Activated CD4-positive, alpha-beta memory T cell treated with anti-CD3 and anti-CD28 coated beads, Interleukin-2, amount 10 ng/mL, durations not matched to agents 7 days and 5 days (primary cell): ENCODE measurements at regions of chr17 and their contacts with region 1.

Region 1: DNA sequence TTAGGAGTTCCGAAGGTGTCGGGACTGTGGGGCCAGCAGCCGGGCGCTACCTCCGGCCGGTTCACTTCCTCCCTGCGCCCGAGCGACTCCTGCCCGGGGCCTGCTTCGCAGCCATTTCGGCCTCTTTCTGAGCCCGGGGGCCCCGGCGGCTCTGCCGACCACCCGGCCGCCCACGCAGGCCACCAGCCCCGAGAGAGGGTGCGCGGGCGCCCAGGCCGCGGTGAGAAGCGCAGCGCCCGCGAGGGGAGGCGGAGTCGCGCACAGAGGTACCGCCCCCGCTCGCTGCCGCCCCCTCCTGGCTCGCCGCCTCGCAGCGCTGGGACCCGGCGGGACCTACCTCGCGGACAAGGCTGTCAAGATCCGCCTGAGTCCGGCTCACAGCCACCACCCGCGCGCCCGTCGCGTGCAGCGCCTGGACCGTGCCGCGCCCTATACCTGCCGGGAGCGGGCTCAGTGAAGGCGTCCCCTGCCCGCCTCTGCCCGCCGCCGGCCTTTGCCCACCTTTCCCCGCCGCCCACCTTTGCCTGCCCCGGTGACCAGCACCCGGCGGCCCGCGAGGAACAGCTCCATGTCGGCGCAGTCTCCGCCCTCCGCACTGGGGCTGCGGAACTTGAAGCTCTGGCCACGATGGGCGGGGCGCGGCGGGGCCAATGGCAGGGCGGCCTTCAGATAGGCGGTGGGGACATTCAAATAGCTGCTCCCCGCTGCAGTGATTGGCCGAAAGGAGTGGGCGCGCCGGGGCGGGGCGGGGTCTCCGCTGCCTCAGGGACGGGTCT is at the start of gene DCXR:
- DNase-seq: peak; percentile 97
- H3K4me3 Mint-ChIP-seq: peak within 1 kb of the TSS; percentile 83
- H3K27ac Mint-ChIP-seq: peak within 1 kb of the TSS; percentile 94
- H3K4me1 Mint-ChIP-seq: peaks cover 28% of the 10 kb centered on the region
- H3K27me3 Mint-ChIP-seq: no peaks in the 10 kb centered on the region
- total RNA-seq, gene DCXR: 93.9 to 95.2 TPM

Region 2: GRCh38 chr17:81991684-81992305 is 45.5 kb before region 1 on chr17:
- CTCF ChIA-PET with region 1: no interaction called
- POLR2A ChIA-PET with region 1: no interaction called
- DNase-seq: no peak
- H3K4me3 Mint-ChIP-seq: no peak overlapping the region
- H3K27ac Mint-ChIP-seq: no peak overlapping the region
- H3K4me1 Mint-ChIP-seq: no peaks in the 10 kb centered on the region
- H3K27me3 Mint-ChIP-seq: no peaks in the 10 kb centered on the region

Region 3: GRCh38 chr17:82022981-82023374 is 14.3 kb before region 1 on chr17 and contains the start of gene LRRC45:
- CTCF ChIA-PET with region 1: interaction called, 43 read pairs
- POLR2A ChIA-PET with region 1: interaction called, 41 read pairs
- DNase-seq: peak; percentile 100
- H3K4me3 Mint-ChIP-seq: peak within 1 kb of the TSS; percentile 82
- H3K27ac Mint-ChIP-seq: peak within 1 kb of the TSS; percentile 60
- H3K4me1 Mint-ChIP-seq: peaks cover 42% of the 10 kb centered on the region
- H3K27me3 Mint-ChIP-seq: no peaks in the 10 kb centered on the region
- total RNA-seq, gene LRRC45: 34.8 to 35.5 TPM

Region 4: DNA sequence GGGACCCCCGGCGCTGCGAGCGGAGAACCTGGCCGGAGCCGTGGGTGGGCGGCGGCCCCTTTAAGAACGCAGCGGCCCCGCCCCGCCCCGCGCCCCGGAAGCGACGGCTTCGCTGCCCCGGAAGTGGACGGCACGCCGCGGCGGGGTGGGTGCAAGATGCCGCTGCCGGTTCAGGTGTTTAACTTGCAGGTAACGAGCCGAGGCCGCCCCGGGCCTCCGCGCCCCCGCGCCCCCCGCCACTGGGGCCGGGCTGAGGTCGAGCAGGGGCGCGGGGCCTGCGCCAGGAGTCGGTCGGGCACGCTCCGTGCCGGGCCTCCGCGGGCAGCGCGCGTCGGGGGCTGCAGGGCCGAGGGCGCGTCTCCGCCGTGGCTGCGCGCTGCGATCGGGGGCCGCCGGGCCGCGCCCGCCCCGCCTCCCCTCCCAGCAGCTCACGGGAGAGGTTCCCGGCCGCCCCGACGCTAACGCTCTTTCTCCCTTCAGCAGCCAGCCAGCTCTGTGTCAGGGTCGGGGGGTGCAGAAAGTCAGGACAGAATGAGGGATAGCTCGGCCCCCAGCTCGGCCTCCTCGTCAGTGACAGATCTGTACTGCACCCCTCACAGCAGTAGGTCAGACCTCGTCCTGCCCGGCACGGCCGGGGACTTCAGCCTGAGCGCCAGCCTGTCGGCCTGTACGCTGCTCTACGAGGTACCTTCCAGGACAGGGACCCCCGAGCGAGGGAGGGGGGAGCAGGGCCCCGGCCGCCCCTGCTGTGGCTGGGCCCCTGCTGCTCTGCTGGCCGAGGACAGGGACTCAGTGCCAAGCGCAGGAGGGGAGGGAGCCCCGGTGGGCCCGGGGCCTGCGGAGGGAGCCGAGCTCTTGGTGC is 14.7 kb after region 1 on chr17 and contains the starts of genes GPS1 and RFNG:
- CTCF ChIA-PET with region 1: interaction called, 9 read pairs
- POLR2A ChIA-PET with region 1: interaction called, 27 read pairs
- DNase-seq: peak; percentile 85
- H3K4me3 Mint-ChIP-seq: peak within 1 kb of the TSS; percentile 84
- H3K27ac Mint-ChIP-seq: peak within 1 kb of the TSS; percentile 78
- H3K4me1 Mint-ChIP-seq: peaks cover 25% of the 10 kb centered on the region
- H3K27me3 Mint-ChIP-seq: no peaks in the 10 kb centered on the region
- total RNA-seq, gene GPS1: 69.0 to 75.6 TPM
- total RNA-seq, gene RFNG: 26.3 to 28.4 TPM

Region 5: DNA sequence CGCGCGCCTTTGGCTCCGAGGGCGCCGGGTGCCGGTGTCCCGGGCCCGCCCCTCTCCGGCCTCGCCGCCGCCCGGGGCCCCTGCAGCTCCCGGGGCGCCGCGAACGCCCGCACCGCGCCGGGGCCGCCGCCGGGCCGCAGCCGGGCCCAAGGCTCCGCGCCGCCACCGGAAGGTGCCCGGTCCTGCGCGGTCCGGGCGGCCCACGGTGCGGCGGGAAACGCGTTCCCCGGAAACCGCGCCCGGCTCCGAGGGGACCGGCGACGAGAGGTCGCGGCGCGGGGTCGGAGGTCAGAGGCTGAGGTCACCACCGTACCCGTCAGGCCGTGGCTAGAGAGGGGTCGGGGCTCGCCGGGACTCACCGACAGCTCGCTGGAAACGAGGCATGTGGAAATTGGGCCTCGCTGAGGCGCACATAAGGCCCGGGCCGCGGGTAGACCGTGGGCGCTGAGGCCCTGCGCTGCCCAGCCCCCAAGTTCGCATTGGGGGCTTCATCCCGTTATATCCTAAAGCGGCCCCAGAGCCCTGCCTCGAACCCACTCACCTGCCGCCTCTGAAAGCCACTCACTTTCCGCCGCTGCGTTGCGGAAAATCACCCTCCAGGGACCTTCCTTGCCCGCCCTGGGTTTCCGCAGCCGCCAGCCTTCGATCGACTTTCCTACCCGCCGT is 28.5 kb after region 1 on chr17 and contains the start of gene DUS1L:
- CTCF ChIA-PET with region 1: interaction called, 9 read pairs
- POLR2A ChIA-PET with region 1: interaction called, 16 read pairs
- DNase-seq: peak; percentile 78
- H3K4me3 Mint-ChIP-seq: peak within 1 kb of the TSS; percentile 82
- H3K27ac Mint-ChIP-seq: peak within 1 kb of the TSS; percentile 82
- H3K4me1 Mint-ChIP-seq: peaks cover 17% of the 10 kb centered on the region
- H3K27me3 Mint-ChIP-seq: peaks cover 2% of the 10 kb centered on the region
- total RNA-seq, gene DUS1L: 98.8 to 99.3 TPM

Region 6: GRCh38 chr17:82212331-82213250 is 175.3 kb after region 1 on chr17 and contains the start of gene CCDC57:
- CTCF ChIA-PET with region 1: no interaction called
- POLR2A ChIA-PET with region 1: no interaction called
- DNase-seq: peak; percentile 77
- H3K4me3 Mint-ChIP-seq: peak within 1 kb of the TSS; percentile 77
- H3K27ac Mint-ChIP-seq: peak within 1 kb of the TSS; percentile 52
- H3K4me1 Mint-ChIP-seq: peaks cover 43% of the 10 kb centered on the region
- H3K27me3 Mint-ChIP-seq: no peaks in the 10 kb centered on the region
- total RNA-seq, gene CCDC57: 49.8 to 54.9 TPM